Adrenal gland (tissue), 19 donors: ENCODE measurements at regions of chr2 and their contacts with region 1.

Region 1: GRCh38 chr2:144516981-144517865 is 2.7 kb downstream of the ZEB2 start:
- DNase-seq: peak; percentile 66 to 86 (median 82)
- H3K4me3 ChIP-seq: peak overlapping the region; percentile 78 to 94 (median 90)
- H3K27ac ChIP-seq: peak overlapping the region; percentile 91 to 100 (median 99)
- H3K4me1 ChIP-seq: peaks cover 18 to 33% of the 10 kb centered on the region in 2 donors
- H3K27me3 ChIP-seq: no peaks in the 10 kb centered on the region
- CTCF ChIP-seq: no peak
- POLR2A ChIP-seq: peak; percentile 38 to 95

Region 2: DNA sequence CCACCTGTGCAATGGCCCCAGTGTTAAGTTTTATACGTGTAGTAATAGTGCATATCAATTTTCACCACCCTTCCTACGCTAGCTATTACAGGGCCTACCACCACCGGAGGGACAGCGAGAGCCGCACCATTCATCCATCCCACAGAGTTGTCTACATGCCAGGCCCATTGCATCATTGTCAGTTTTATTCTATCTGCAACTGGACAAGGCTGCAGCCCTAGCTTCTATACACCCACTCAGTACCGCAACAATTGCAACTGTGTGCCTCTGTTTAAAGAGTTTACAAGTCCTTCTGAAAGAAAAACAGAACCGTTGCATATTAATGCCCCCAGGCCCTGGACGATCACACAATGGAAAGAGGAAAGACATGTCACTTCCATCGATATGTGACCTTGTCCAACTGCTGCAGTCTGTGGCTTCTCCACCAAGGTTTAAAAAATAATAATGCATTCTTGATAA is 55.9 kb before region 1 on chr2:
- intact Hi-C with region 1: loop called in 1 of 2 experiments (anchors 10 kb)
- DNase-seq: peak in 6 of 7 donors; percentile 43 to 68 (median 63)
- H3K4me3 ChIP-seq: no peak overlapping the region
- H3K27ac ChIP-seq: peak overlapping the region in 3 of 5 donors; percentile 40 to 63 (median 62)
- H3K4me1 ChIP-seq: peaks cover 47 to 71% of the 10 kb centered on the region in 2 donors
- H3K27me3 ChIP-seq: no peaks in the 10 kb centered on the region
- CTCF ChIP-seq: peak in 1 of 6 experiments; percentile 4
- POLR2A ChIP-seq: no peak